ENCODE measurements at regions of chr6 and their contacts with region 1.

Region 1: GRCh38 chr6:6547110-6547879 is 41.2 kb upstream of the LY86 start:
- DNase-seq: peak; percentile 89
- CTCF ChIP-seq: peak; percentile 87

Region 2: DNA sequence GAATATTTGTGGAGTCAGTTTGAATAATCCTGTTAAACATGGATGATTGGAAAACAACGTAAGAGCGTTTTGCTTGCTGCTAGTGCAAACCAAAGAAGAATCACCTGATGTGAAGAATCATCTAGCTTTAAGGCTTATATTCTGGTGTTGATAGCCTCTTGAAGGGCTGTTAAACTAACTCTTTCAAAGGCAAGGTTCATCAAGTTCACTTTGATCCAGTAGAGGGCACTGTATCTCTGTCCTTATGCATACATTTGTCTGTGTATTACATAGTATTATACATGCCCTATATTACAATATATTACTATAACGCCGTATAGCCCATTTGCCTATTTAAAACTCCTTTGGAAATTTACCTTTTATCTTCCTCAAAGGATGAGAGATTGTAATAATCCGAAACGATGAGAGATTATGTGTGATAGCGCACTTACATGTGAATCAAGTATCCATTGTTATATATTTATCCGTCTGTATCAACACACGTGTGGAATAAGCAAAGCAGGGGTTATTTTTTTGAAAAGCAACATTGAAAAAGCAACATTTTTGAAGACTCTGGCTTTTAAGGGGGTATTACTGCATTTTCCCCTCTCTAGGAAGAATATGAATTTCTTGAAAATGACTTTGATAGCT is 489.8 kb before region 1 on chr6:
- in situ Hi-C with region 1: loop called (anchors 10 kb)
- DNase-seq: peak; percentile 72
- CTCF ChIP-seq: peak; percentile 65

Region 3: DNA sequence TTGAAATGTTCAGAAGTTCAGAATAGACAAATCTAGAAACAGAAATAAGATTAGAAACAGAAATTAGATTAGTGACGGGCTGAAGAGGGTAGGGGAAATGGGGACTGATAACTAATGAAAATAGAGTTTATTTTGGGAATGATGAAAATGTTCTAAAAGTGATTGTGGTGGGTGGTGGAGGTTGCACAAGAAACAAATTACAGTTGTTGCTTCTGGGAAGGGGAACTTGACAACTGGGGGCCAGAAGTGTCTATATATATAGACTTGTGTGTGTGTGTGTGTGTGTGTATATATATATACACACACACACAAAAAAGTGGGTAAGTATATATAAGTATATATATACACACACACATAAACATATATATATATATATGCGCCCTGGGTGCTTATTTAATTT is 474.0 kb after region 1 on chr6:
- in situ Hi-C with region 1: no loop called
- DNase-seq: no peak
- CTCF ChIP-seq: no peak

Measured in GM13977 (cell line).